Common myeloid progenitor, CD34-positive (primary cell): ENCODE measurements at regions of chr4 and their contacts with region 1.

Region 1: GRCh38 chr4:5998333-5998936 is 19.8 kb downstream of the C4orf50 start:
- DNase-seq: peak; percentile 59 to 79 (median 71)
- H3K4me3 ChIP-seq: no peak overlapping the region
- H3K27ac ChIP-seq: no peak overlapping the region
- H3K4me1 ChIP-seq: peaks cover 0 to 4% (median 0%) of the 10 kb centered on the region in 4 experiments
- H3K27me3 ChIP-seq: peaks cover 0 to 32% (median 2%) of the 10 kb centered on the region in 5 experiments

Region 2: GRCh38 chr4:5982156-5982973 is 16.1 kb before region 1 on chr4:
- CTCF ChIA-PET with region 1: interaction called, 20 read pairs
- POLR2A ChIA-PET with region 1: no interaction called
- DNase-seq: no peak
- H3K4me3 ChIP-seq: no peak overlapping the region
- H3K27ac ChIP-seq: no peak overlapping the region
- H3K4me1 ChIP-seq: no peaks in the 10 kb centered on the region
- H3K27me3 ChIP-seq: peaks cover 0 to 27% (median 11%) of the 10 kb centered on the region in 5 experiments

Region 3: DNA sequence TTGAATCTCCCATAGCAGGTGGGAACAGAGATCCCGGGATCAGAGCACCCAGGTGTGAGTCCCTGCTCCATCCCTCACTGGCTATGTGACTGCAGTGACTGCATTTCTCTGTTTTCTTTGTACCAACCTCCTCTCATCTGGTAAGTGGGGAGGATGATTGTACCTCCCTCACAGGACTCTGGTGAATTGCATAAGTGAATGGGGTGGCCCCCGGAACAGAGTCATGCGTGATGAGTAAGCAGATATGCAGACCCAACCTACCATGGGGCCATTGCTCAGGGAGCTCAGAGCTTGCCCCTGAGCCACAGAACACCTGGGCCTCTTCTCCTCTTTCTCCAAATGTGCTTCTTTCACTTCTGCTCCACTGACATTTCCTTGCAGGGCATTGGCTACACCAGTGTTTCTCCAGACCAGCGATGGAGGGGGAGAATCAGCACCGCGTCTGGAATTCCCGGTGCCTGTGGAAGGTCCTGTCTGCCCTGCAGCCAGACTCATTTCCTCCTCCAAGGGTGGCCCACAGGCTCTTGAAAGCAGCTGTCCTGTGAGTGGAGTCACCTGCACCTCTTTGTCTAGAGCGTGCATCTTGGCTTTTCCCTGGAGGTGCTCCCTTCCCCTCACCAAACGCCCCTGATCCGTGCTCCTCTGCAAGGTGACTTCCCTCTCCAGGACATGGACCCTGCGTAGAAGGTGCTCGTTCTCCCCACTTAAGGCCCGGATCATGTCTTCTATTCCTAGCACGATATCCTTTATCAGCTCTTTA is 10.2 kb before region 1 on chr4:
- CTCF ChIA-PET with region 1: interaction called, 20 read pairs
- POLR2A ChIA-PET with region 1: no interaction called
- DNase-seq: peak in 2 of 3 donors; percentile 21 to 22
- H3K4me3 ChIP-seq: no peak overlapping the region
- H3K27ac ChIP-seq: no peak overlapping the region
- H3K4me1 ChIP-seq: peaks cover 0 to 2% (median 0%) of the 10 kb centered on the region in 4 experiments
- H3K27me3 ChIP-seq: peaks cover 0 to 24% (median 0%) of the 10 kb centered on the region in 5 experiments

Region 4: GRCh38 chr4:6011686-6012085 is 13.3 kb after region 1 on chr4:
- CTCF ChIA-PET with region 1: interaction called, 59 read pairs
- POLR2A ChIA-PET with region 1: no interaction called
- DNase-seq: no peak
- H3K4me3 ChIP-seq: peak overlapping the region in 3 of 7 experiments; percentile 38 to 49 (median 44)
- H3K27ac ChIP-seq: no peak overlapping the region
- H3K4me1 ChIP-seq: peaks cover 5 to 28% (median 22%) of the 10 kb centered on the region in 4 experiments
- H3K27me3 ChIP-seq: peaks cover 0 to 32% (median 11%) of the 10 kb centered on the region in 5 experiments

Region 5: GRCh38 chr4:6019316-6020263 is 21.2 kb after region 1 on chr4:
- CTCF ChIA-PET with region 1: interaction called, 59 read pairs
- POLR2A ChIA-PET with region 1: no interaction called
- DNase-seq: peak; percentile 48 to 66 (median 60)
- H3K4me3 ChIP-seq: no peak overlapping the region
- H3K27ac ChIP-seq: no peak overlapping the region
- H3K4me1 ChIP-seq: no peaks in the 10 kb centered on the region
- H3K27me3 ChIP-seq: peaks cover 0 to 3% (median 0%) of the 10 kb centered on the region in 5 experiments

Region 6: DNA sequence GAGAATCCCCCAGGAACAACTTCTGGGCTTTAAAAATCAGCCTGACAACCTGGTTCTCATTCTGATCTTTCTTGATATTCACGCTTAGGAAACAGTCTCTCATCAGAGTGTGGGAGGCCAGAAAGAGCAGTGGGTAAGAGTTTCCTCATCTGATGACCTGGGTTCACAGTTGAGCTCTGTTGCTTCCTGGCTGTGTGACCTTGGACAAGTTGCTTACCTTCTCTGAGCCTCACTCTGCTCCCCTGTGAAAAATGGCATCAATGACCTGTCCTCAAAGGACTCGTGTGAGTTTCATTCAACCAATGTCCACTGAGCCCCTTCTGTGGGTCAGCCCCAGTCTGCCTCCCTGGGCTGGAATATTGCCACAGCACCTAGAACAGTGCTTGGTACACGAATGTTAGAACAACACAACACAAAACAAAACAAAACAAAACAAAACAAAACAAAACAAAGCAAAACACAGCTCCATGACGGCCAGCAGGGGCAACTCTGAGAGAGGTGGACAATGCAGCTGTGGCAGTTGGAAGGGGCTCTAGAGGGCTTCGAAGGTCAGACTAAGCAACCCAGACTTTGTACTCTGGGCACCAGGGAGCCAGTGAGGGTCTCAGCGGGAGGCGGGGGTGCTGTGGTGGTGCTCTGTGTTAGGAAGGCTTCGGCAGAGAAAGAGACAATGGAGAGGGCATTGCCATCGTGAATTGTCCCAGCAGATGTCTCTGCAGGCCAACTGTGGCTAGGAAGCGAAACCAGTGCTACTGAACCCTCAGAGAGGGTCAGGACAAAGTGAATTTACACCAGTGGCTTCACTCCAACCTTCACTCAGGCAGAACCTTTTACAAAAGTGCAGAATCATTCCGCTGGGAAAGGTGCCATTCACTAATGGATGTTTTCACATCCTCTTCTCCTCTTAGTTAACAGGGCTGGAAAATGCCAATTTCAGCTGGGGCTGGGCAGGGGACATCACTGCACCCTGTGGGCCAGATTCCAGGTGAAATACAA is 34.1 kb after region 1 on chr4:
- CTCF ChIA-PET with region 1: interaction called, 10 read pairs
- POLR2A ChIA-PET with region 1: no interaction called
- DNase-seq: peak; percentile 78 to 84 (median 81)
- H3K4me3 ChIP-seq: no peak overlapping the region
- H3K27ac ChIP-seq: no peak overlapping the region
- H3K4me1 ChIP-seq: peaks cover 0 to 15% (median 3%) of the 10 kb centered on the region in 4 experiments
- H3K27me3 ChIP-seq: peaks cover 0 to 3% (median 0%) of the 10 kb centered on the region in 5 experiments

Region 7: GRCh38 chr4:6087673-6088341 is 89.4 kb after region 1 on chr4:
- CTCF ChIA-PET with region 1: interaction called, 21 read pairs
- POLR2A ChIA-PET with region 1: no interaction called
- DNase-seq: peak; percentile 30 to 49 (median 34)
- H3K4me3 ChIP-seq: no peak overlapping the region
- H3K27ac ChIP-seq: no peak overlapping the region
- H3K4me1 ChIP-seq: peaks cover 0 to 10% (median 2%) of the 10 kb centered on the region in 4 experiments
- H3K27me3 ChIP-seq: peaks cover 0 to 6% (median 0%) of the 10 kb centered on the region in 5 experiments